ENCODE measurements at regions of chr2 and their contacts with region 1.

Region 1: DNA sequence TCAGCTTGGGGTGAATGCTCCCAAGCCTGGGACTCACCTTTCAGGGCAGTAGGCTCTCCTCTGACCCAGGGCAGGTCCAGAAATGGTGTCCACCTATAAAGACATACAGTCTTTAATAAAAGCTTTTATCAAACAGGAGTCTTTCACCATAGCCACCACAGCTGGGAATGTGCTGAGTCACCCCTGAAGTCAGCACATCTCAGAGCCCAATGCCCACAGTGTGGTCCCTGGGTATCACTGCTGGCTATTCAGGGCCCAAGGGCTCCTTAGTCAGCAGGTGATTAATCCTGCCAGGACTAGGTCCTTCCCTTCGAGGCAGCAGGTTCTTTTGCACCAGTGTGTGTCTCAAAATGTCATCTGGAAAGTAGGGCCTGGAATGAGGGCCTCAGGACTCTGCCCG is 181.9 kb downstream of the MEMO1 start:
- DNase-seq: peak in 1 of 2 donors; percentile 30
- ATAC-seq: peak in 1 of 2 donors; percentile 51
- H3K4me3 ChIP-seq: no peak overlapping the region
- H3K27ac ChIP-seq: no peak overlapping the region
- H3K4me1 ChIP-seq: no peaks in the 10 kb centered on the region
- H3K27me3 ChIP-seq: no peaks in the 10 kb centered on the region
- CTCF ChIP-seq: no peak
- POLR2A ChIP-seq: no peak

Region 2: GRCh38 chr2:31688282-31688681 is 140.6 kb before region 1 on chr2:
- in situ Hi-C with region 1: loop called in 3 of 4 experiments (anchors 10 to 25 kb)
- intact Hi-C with region 1: no loop called
- DNase-seq: no peak
- ATAC-seq: no peak
- H3K4me3 ChIP-seq: no peak overlapping the region
- H3K27ac ChIP-seq: no peak overlapping the region
- H3K4me1 ChIP-seq: no peaks in the 10 kb centered on the region
- H3K27me3 ChIP-seq: no peaks in the 10 kb centered on the region
- CTCF ChIP-seq: peak; percentile 51 to 63 (median 59)
- POLR2A ChIP-seq: no peak

Region 3: DNA sequence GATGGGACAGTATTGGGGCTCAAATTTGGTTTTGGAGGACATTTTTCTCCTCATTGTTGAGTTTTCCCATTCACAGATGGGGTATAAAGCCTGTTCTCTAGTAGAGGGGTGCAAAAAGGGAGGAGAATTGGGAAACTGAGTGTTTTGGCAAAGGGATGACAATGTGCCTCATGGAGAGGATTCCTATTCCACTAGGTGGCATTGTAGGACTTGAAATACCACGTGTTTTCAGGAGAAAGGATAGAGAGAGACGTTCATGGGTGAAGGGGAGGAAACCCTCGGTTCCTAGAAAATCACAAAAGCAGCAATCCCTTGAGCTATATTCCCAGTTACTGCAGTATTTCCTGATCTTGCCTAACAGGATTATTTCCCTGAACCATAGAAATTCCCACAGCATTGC is 134.4 kb before region 1 on chr2:
- in situ Hi-C with region 1: loop called in 3 of 4 experiments (anchors 10 to 25 kb)
- intact Hi-C with region 1: no loop called
- DNase-seq: no peak
- ATAC-seq: no peak
- H3K4me3 ChIP-seq: no peak overlapping the region
- H3K27ac ChIP-seq: no peak overlapping the region
- H3K4me1 ChIP-seq: no peaks in the 10 kb centered on the region
- H3K27me3 ChIP-seq: no peaks in the 10 kb centered on the region
- CTCF ChIP-seq: peak in 2 of 5 experiments; percentile 17 to 28
- POLR2A ChIP-seq: no peak

Measured in gastrocnemius medialis (tissue), 4 donors.